ENCODE measurements at regions of chr6 and their contacts with region 1.

Region 1: GRCh38 chr6:134882426-134883038 is 67.4 kb downstream of the ALDH8A1 start:
- DNase-seq: no peak
- ATAC-seq: peak; percentile 77

Region 2: GRCh38 chr6:134123666-134124208 is 758.8 kb before region 1 on chr6:
- intact Hi-C with region 1: loop called (anchors 10 kb)
- DNase-seq: no peak
- ATAC-seq: no peak

Region 3: GRCh38 chr6:134161036-134161435 is 721.5 kb before region 1 on chr6:
- intact Hi-C with region 1: loop called (anchors 1 kb)
- DNase-seq: no peak
- ATAC-seq: no peak

Region 4: GRCh38 chr6:134640975-134641429 is 241.5 kb before region 1 on chr6:
- intact Hi-C with region 1: loop called (anchors 5 kb)
- DNase-seq: peak; percentile 78
- ATAC-seq: peak; percentile 91

Region 5: GRCh38 chr6:135014353-135014832 is 131.9 kb after region 1 on chr6:
- intact Hi-C with region 1: no loop called
- DNase-seq: no peak
- ATAC-seq: no peak

Measured in Right ventricle myocardium inferior (tissue), 1 donor.